Naive thymus-derived CD4-positive, alpha-beta T cell (primary cell): ENCODE measurements at regions of chr1 and their contacts with region 1.

Region 1: GRCh38 chr1:13960375-13960987 is 260.5 kb downstream of the PRDM2 start:
- DNase-seq: peak; percentile 15 to 60 (median 47)
- ATAC-seq: peak; percentile 60
- H3K4me3 ChIP-seq: no peak overlapping the region
- H3K4me3 Mint-ChIP-seq: no peak overlapping the region
- H3K27ac ChIP-seq: no peak overlapping the region
- H3K27ac Mint-ChIP-seq: no peak overlapping the region
- H3K4me1 ChIP-seq: no peaks in the 10 kb centered on the region
- H3K4me1 Mint-ChIP-seq: no peaks in the 10 kb centered on the region
- H3K27me3 ChIP-seq: peaks cover 0 to 2% of the 10 kb centered on the region in 2 donors
- H3K27me3 Mint-ChIP-seq: peaks cover 0 to 55% (median 42%) of the 10 kb centered on the region in 5 donors

Region 2: GRCh38 chr1:13667691-13668090 is 292.8 kb before region 1 on chr1:
- CTCF ChIA-PET with region 1: interaction called, 11 read pairs
- POLR2A ChIA-PET with region 1: no interaction called
- intact Hi-C with region 1: no loop called
- DNase-seq: no peak
- ATAC-seq: no peak
- H3K4me3 ChIP-seq: no peak overlapping the region
- H3K4me3 Mint-ChIP-seq: no peak overlapping the region
- H3K27ac ChIP-seq: no peak overlapping the region
- H3K27ac Mint-ChIP-seq: no peak overlapping the region
- H3K4me1 ChIP-seq: no peaks in the 10 kb centered on the region
- H3K4me1 Mint-ChIP-seq: peaks cover 0 to 8% (median 0%) of the 10 kb centered on the region in 7 donors
- H3K27me3 ChIP-seq: no peaks in the 10 kb centered on the region
- H3K27me3 Mint-ChIP-seq: peaks cover 0 to 8% (median 0%) of the 10 kb centered on the region in 5 donors

Region 3: DNA sequence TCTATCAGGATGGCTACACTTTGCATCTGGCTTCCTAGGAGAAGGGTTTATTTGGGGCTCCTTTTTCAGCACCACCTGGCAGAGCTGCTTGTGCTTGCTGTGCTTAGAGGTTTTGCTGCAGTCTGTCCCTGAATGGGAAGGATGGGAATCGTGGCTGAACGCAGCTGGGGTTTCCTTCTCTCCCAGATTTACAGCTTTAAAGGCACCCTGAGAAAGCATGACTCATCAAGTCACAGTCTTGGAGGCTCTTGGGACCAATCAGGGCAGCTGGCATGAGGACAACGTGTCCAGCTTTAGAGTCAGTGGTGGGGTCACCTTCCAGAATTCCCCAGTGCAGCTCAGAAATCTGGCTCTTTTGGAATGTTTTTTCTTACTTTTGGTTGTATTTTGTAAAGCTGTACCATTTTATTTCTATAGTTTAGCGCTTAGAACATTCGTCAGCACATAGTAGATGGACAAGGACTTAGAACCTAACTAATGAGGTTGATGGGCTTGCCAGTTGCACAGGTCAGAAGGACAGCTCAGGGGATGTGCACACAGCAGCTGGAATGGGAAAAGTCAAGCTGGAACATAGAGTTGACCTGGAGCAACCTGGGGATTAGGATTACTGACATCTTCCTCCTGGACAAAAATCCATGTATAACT is 37.9 kb before region 1 on chr1:
- CTCF ChIA-PET with region 1: no interaction called
- POLR2A ChIA-PET with region 1: no interaction called
- intact Hi-C with region 1: no loop called
- DNase-seq: no peak
- ATAC-seq: no peak
- H3K4me3 ChIP-seq: no peak overlapping the region
- H3K4me3 Mint-ChIP-seq: no peak overlapping the region
- H3K27ac ChIP-seq: no peak overlapping the region
- H3K27ac Mint-ChIP-seq: no peak overlapping the region
- H3K4me1 ChIP-seq: no peaks in the 10 kb centered on the region
- H3K4me1 Mint-ChIP-seq: no peaks in the 10 kb centered on the region
- H3K27me3 ChIP-seq: no peaks in the 10 kb centered on the region
- H3K27me3 Mint-ChIP-seq: peaks cover 2 to 36% (median 17%) of the 10 kb centered on the region in 5 donors

Region 4: GRCh38 chr1:14238472-14239307 is 278.2 kb after region 1 on chr1:
- CTCF ChIA-PET with region 1: no interaction called
- POLR2A ChIA-PET with region 1: no interaction called
- intact Hi-C with region 1: no loop called
- DNase-seq: no peak
- ATAC-seq: no peak
- H3K4me3 ChIP-seq: no peak overlapping the region
- H3K4me3 Mint-ChIP-seq: no peak overlapping the region
- H3K27ac ChIP-seq: no peak overlapping the region
- H3K27ac Mint-ChIP-seq: no peak overlapping the region
- H3K4me1 ChIP-seq: no peaks in the 10 kb centered on the region
- H3K4me1 Mint-ChIP-seq: no peaks in the 10 kb centered on the region
- H3K27me3 ChIP-seq: no peaks in the 10 kb centered on the region
- H3K27me3 Mint-ChIP-seq: peaks cover 0 to 20% (median 3%) of the 10 kb centered on the region in 5 donors